K562 (cell line): ENCODE measurements at regions of chr14 and their contacts with region 1.

Region 1: GRCh38 chr14:37874429-37875191 is 279.2 kb downstream of the TTC6 start:
- DNase-seq: peak; percentile 62 to 72 (median 69)
- ATAC-seq: peak; percentile 95
- H3K4me3 ChIP-seq: no peak overlapping the region
- H3K27ac ChIP-seq: no peak overlapping the region
- H3K4me1 ChIP-seq: no peaks in the 10 kb centered on the region; a peak in 1 of 5 replicates
- H3K27me3 ChIP-seq: no peaks in the 10 kb centered on the region
- CTCF ChIP-seq: peak; percentile 71 to 75 (median 73)
- EP300 ChIP-seq: no peak
- POLR2A ChIP-seq: no peak
- RAD21 ChIP-seq: peak; percentile 63 to 71

Region 2: GRCh38 chr14:37246427-37246914 is 628.1 kb before region 1 on chr14:
- CTCF ChIA-PET with region 1: interaction called, 11 read pairs
- POLR2A ChIA-PET with region 1: no interaction called
- in situ Hi-C with region 1: loop called (anchors 5 kb)
- intact Hi-C with region 1: loop called (anchors 1 kb)
- DNase-seq: peak; percentile 16 to 54 (median 24)
- ATAC-seq: 0 out of 3 replicates have a peak, but pooled peaks have one; percentile 39
- H3K4me3 ChIP-seq: no peak overlapping the region
- H3K27ac ChIP-seq: no peak overlapping the region
- H3K4me1 ChIP-seq: no peaks in the 10 kb centered on the region
- H3K27me3 ChIP-seq: no peaks in the 10 kb centered on the region
- CTCF ChIP-seq: peak in 2 of 3 experiments; percentile 53 to 71; a peak in 4 of 6 replicates
- EP300 ChIP-seq: no peak
- POLR2A ChIP-seq: no peak
- RAD21 ChIP-seq: peak; percentile 67 to 73

Region 3: GRCh38 chr14:37253905-37254304 is 620.7 kb before region 1 on chr14:
- CTCF ChIA-PET with region 1: no interaction called
- POLR2A ChIA-PET with region 1: no interaction called
- in situ Hi-C with region 1: loop called (anchors 5 kb)
- intact Hi-C with region 1: no loop called
- DNase-seq: no peak
- ATAC-seq: no peak
- H3K4me3 ChIP-seq: no peak overlapping the region
- H3K27ac ChIP-seq: no peak overlapping the region
- H3K4me1 ChIP-seq: no peaks in the 10 kb centered on the region
- H3K27me3 ChIP-seq: no peaks in the 10 kb centered on the region
- CTCF ChIP-seq: no peak
- EP300 ChIP-seq: no peak
- POLR2A ChIP-seq: no peak
- RAD21 ChIP-seq: no peak

Region 4: GRCh38 chr14:37594238-37594914 is 280.2 kb before region 1 on chr14:
- CTCF ChIA-PET with region 1: no interaction called
- POLR2A ChIA-PET with region 1: no interaction called
- in situ Hi-C with region 1: no loop called
- intact Hi-C with region 1: loop called (anchors 2 kb)
- DNase-seq: peak; percentile 42 to 89 (median 60)
- ATAC-seq: peak; percentile 73
- H3K4me3 ChIP-seq: peak overlapping the region; percentile 56
- H3K27ac ChIP-seq: peak overlapping the region; percentile 62; the same call in 2 of the 3 replicates
- H3K4me1 ChIP-seq: peaks cover 3 to 21% of the 10 kb centered on the region in 2 experiments; a peak in 4 of 5 replicates
- H3K27me3 ChIP-seq: no peaks in the 10 kb centered on the region
- CTCF ChIP-seq: peak; percentile 66 to 85 (median 75)
- EP300 ChIP-seq: no peak
- POLR2A ChIP-seq: no peak
- RAD21 ChIP-seq: peak; percentile 49 to 56

Region 5: DNA sequence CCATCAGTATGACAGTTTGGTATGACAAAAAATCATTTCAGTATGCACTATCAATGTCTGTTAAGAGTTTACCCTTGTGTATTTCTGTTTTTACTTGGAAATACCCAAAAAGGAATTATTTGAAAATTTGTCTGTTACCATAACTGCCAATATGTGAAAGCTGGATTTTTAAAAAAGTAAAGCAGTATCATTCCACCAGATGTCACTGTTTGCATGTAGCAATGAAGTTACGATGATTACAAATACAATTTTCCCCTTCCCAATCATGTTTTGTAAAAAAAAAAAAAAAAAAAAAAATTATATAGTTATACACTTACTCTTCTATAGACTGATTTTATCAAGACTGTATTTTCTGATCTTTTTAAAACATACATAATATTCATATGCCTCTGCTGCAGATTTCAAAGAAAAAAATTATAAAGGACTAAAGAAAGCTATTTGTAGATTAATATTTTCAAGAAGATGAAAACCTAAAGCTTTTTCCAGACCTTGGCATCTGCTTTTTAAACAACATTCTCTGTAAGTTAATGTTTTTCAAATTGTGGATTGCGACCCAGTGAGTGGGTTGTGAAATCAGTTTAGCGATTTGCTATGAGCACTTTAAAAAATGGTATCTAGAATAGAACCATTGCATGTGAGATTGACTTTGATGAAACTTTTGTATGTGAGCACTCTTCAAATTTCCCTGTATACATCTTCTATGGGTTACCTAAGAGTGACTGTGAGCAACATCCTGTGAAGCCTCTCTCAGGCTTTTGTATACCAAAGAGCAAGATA is 165.0 kb before region 1 on chr14:
- CTCF ChIA-PET with region 1: interaction called, 8 read pairs
- POLR2A ChIA-PET with region 1: no interaction called
- in situ Hi-C with region 1: loop called (anchors 10 kb)
- intact Hi-C with region 1: loop called (anchors 1 kb)
- DNase-seq: peak in 1 of 4 experiments; percentile 7
- ATAC-seq: no peak
- H3K4me3 ChIP-seq: no peak overlapping the region
- H3K27ac ChIP-seq: no peak overlapping the region
- H3K4me1 ChIP-seq: no peaks in the 10 kb centered on the region
- H3K27me3 ChIP-seq: no peaks in the 10 kb centered on the region
- CTCF ChIP-seq: peak in 1 of 3 experiments; percentile 36; a peak in 3 of 6 replicates
- EP300 ChIP-seq: no peak
- POLR2A ChIP-seq: no peak
- RAD21 ChIP-seq: peak; percentile 25 to 29; a peak in 2 of 4 replicates

Region 6: GRCh38 chr14:38224338-38224737 is 349.7 kb after region 1 on chr14:
- CTCF ChIA-PET with region 1: no interaction called
- POLR2A ChIA-PET with region 1: no interaction called
- in situ Hi-C with region 1: no loop called
- intact Hi-C with region 1: no loop called
- DNase-seq: no peak
- ATAC-seq: no peak
- H3K4me3 ChIP-seq: no peak overlapping the region
- H3K27ac ChIP-seq: no peak overlapping the region
- H3K4me1 ChIP-seq: no peaks in the 10 kb centered on the region
- H3K27me3 ChIP-seq: no peaks in the 10 kb centered on the region
- CTCF ChIP-seq: no peak
- EP300 ChIP-seq: no peak
- POLR2A ChIP-seq: no peak
- RAD21 ChIP-seq: no peak

Region 7: GRCh38 chr14:38867561-38868150 is 993.0 kb after region 1 on chr14:
- CTCF ChIA-PET with region 1: no interaction called
- POLR2A ChIA-PET with region 1: no interaction called
- in situ Hi-C with region 1: loop called (anchors 25 kb)
- intact Hi-C with region 1: no loop called
- DNase-seq: peak; percentile 27 to 70 (median 41)
- ATAC-seq: peak; percentile 96
- H3K4me3 ChIP-seq: no peak overlapping the region
- H3K27ac ChIP-seq: no peak overlapping the region
- H3K4me1 ChIP-seq: no peaks in the 10 kb centered on the region
- H3K27me3 ChIP-seq: no peaks in the 10 kb centered on the region
- CTCF ChIP-seq: peak; percentile 52 to 67 (median 66)
- EP300 ChIP-seq: no peak
- POLR2A ChIP-seq: no peak
- RAD21 ChIP-seq: peak; percentile 23 to 68; a peak in 2 of 4 replicates